ENCODE measurements at regions of chr10 and their contacts with region 1.

Region 1: DNA sequence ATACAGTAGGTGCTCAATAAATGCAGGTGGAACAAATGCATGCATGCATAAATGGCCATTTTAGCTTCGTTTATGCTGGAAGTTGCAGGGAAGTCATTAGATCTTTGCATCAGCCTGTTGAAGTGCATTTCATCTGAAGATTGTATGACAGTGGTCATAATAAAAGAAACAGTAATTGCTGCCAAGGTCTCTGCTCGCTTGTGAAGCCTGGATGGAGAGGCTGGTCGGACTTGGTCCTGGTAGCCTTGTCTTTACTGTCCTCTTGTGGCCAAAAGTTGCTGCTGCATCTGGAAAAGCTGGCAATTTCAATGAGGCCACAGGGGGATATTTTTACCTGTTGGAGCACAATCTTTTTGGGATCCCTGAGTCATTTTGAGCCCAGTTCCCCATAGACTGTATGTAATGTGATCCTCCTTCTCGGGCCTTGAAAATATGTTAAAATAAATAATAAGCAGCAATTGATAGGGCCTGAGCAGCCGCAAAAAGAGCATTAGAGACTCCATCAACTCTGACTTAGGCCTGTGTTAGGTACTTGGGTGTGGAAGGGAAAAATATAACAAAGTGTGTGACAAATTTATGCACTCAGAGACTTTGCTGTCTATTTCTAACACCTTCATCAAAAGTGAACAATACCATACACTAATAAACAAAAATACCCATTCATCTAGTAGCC is 31.6 kb upstream of the HABP2 start:
- DNase-seq: peak; percentile 51 to 75
- ATAC-seq: peak; percentile 85 to 98 (median 95)
- H3K4me3 ChIP-seq: no peak overlapping the region
- H3K27ac ChIP-seq: no peak overlapping the region
- H3K4me1 ChIP-seq: peaks cover 8% of the 10 kb centered on the region
- H3K27me3 ChIP-seq: peaks cover 0 to 1% (median 0%) of the 10 kb centered on the region in 3 donors
- CTCF ChIP-seq: peak; percentile 97

Region 2: DNA sequence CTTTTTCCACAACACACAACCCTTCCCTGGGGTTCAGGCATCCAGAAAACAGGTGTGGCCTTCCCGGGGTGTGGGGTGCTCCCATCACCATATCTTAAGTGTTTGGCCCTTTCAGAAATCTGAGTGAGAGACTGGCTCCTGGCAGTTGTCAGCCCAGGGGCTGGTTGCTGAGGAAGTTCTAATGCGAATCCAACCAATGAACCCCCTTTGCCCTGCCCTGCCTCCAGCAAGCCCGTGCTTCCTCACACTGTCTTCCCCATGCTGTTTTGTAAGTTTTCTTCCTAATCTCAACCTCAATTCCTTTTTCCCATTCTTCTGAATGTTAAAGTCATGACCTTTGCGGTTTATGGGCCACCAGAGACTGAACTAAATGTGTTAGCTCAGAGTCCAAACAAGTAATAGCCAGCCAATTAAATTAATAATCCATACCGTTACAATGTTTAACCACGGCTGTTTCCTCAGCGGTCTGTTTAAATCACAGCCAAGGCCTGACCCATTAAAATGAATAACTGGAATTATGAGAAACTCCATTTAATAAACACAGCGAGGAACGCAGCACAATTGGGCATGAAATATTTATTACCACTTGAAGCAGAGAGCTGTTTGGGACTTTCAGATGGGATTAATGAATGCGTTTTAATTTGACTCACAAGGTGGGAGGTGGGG is 662.1 kb before region 1 on chr10:
- intact Hi-C with region 1: no loop called
- DNase-seq: no peak
- ATAC-seq: no peak
- H3K4me3 ChIP-seq: no peak overlapping the region
- H3K27ac ChIP-seq: no peak overlapping the region
- H3K4me1 ChIP-seq: no peaks in the 10 kb centered on the region
- H3K27me3 ChIP-seq: no peaks in the 10 kb centered on the region
- CTCF ChIP-seq: no peak

Region 3: GRCh38 chr10:113449006-113449695 is 72.1 kb before region 1 on chr10:
- intact Hi-C with region 1: loop called in 1 of 2 experiments (anchors 5 kb)
- DNase-seq: no peak
- ATAC-seq: no peak
- H3K4me3 ChIP-seq: no peak overlapping the region
- H3K27ac ChIP-seq: no peak overlapping the region
- H3K4me1 ChIP-seq: no peaks in the 10 kb centered on the region
- H3K27me3 ChIP-seq: no peaks in the 10 kb centered on the region
- CTCF ChIP-seq: no peak

Region 4: DNA sequence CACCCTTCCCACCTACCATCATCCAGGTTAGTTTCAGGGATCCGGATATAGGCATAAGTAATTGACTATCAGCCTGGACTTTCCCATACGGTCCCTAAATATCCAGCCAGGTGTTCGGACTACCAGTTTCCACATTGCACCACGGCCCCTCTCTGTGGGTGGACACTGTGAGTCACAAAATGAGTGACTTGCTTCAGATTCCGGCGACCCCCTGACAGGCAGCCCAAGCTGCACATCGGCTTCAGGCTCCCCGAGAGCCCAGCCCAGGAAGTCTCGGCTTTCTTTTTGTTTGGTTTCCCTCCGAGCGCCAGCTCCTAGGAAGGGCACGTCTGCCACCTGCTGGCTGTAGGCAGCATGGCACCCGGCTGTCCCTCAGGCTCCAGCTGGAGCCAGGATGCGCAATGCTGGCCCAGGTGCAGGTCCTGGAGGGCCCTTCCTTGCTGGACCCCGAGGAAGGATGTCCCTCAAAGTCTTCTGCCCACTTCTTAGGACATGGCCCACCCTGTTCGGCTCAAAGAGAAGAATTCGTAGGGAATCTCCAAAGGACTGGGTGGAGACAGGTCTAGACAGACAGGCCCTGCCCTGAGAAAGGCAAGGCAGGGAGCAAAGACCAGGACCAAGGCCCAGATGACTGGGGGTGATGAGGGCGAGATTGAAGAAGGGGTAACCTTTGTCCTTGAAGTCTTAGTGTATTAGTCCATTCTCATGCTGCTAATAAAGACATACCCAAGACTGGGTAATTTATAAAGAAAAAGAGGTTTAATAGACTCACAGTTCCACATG is 42.2 kb after region 1 on chr10:
- intact Hi-C with region 1: loop called (anchors 2 to 5 kb)
- DNase-seq: peak; percentile 73 to 89
- ATAC-seq: peak; percentile 88 to 95 (median 89)
- H3K4me3 ChIP-seq: peak overlapping the region; percentile 46
- H3K27ac ChIP-seq: no peak overlapping the region
- H3K4me1 ChIP-seq: peaks cover 30% of the 10 kb centered on the region
- H3K27me3 ChIP-seq: no peaks in the 10 kb centered on the region
- CTCF ChIP-seq: peak; percentile 99